Activated CD4-positive, alpha-beta memory T cell treated with anti-CD3 and anti-CD28 coated beads for 36 hours (primary cell): ENCODE measurements at regions of chr2 and their contacts with region 1.

Region 1: DNA sequence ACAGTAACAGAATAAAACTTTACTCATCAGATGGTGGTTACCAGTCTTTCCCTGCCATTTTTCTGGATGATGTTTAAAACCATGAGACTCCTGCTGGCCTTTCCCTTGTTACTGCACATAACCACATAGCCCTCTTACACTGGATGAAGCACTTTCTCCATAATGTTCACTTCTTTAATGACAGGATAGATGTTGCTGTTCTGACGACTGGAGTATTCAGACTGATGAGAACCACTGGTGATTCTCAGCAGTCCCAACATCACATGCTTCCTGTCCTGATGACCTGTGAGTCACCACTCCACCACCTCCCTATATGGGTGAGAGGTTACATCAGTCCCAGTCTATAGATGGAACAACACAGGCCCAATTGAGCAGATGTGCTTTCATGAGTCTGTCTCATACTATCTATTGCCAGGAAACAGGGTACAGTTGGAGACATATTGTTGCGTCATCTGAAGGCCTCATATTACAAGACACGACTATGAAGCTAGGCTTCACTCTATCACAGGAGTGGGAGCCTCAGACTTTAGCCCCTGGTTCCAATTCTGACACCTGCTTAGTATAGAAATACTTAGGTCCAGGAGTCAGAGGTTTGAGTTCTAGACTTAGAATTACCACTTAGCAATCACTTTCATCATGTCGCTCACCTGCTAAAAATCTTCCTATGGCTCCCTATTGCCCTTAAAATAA is 145.7 kb upstream of the KLF7 start:
- DNase-seq: peak; percentile 76
- H3K4me3 Mint-ChIP-seq: peak overlapping the region; percentile 3
- H3K27ac Mint-ChIP-seq: peak overlapping the region; percentile 79
- H3K4me1 Mint-ChIP-seq: peaks cover 28% of the 10 kb centered on the region
- H3K27me3 Mint-ChIP-seq: no peaks in the 10 kb centered on the region

Region 2: GRCh38 chr2:206981739-206982340 is 329.6 kb before region 1 on chr2:
- CTCF ChIA-PET with region 1: no interaction called
- POLR2A ChIA-PET with region 1: no interaction called
- intact Hi-C with region 1: loop called (anchors 10 kb)
- DNase-seq: peak; percentile 70
- H3K4me3 Mint-ChIP-seq: no peak overlapping the region
- H3K27ac Mint-ChIP-seq: no peak overlapping the region
- H3K4me1 Mint-ChIP-seq: peaks cover 5% of the 10 kb centered on the region
- H3K27me3 Mint-ChIP-seq: no peaks in the 10 kb centered on the region

Region 3: DNA sequence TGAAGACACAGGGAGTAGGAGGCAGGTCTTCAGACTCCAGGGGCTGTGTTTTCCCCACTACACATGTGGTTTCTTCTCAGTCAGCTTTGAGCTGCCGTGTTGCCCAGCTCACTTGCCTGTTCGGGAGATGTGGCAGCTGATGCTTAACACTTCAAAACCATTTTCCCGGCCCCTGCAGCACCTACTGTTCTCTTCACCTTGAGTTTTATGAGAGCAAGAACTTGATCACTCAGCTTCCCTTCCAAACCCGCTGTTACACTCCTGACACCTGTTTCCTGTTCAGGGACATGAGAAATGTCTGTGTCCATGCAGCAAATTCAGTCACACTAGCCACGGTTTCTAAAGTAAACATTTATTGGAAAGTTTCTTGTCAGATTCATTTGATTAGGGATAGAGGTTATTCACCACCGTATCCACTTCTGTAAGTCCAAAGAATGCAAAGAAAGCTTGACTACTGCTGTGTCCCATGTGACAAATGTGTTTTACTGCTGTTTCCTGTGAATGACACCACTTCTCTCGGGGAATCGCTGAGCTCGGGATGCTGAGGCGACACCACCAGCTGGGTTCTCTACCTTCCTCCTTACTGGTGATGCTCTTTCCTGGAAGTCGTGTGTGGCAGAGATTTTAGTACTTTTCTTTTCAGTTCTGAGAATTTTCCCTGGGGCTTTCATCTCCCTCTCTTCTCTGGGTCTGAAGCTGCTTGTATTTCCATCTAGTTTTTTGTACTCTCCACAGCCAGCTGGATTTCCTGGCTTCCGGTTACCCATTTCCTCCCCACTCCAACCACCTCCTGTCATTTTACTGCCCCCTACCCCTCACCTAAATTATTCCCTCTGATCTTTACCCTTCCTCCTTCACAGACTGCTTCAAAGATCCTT is 237.4 kb before region 1 on chr2:
- CTCF ChIA-PET with region 1: no interaction called
- POLR2A ChIA-PET with region 1: no interaction called
- intact Hi-C with region 1: loop called (anchors 5 kb)
- DNase-seq: peak; percentile 69
- H3K4me3 Mint-ChIP-seq: peak overlapping the region; percentile 41
- H3K27ac Mint-ChIP-seq: peak overlapping the region; percentile 85
- H3K4me1 Mint-ChIP-seq: peaks cover 27% of the 10 kb centered on the region
- H3K27me3 Mint-ChIP-seq: peaks cover 2% of the 10 kb centered on the region

Region 4: GRCh38 chr2:207283356-207283755 is 28.1 kb before region 1 on chr2:
- CTCF ChIA-PET with region 1: interaction called, 3 read pairs
- POLR2A ChIA-PET with region 1: no interaction called
- intact Hi-C with region 1: loop called (anchors 1 kb)
- DNase-seq: peak; percentile 34
- H3K4me3 Mint-ChIP-seq: no peak overlapping the region
- H3K27ac Mint-ChIP-seq: peak overlapping the region; percentile 65
- H3K4me1 Mint-ChIP-seq: peaks cover 67% of the 10 kb centered on the region
- H3K27me3 Mint-ChIP-seq: no peaks in the 10 kb centered on the region

Region 5: DNA sequence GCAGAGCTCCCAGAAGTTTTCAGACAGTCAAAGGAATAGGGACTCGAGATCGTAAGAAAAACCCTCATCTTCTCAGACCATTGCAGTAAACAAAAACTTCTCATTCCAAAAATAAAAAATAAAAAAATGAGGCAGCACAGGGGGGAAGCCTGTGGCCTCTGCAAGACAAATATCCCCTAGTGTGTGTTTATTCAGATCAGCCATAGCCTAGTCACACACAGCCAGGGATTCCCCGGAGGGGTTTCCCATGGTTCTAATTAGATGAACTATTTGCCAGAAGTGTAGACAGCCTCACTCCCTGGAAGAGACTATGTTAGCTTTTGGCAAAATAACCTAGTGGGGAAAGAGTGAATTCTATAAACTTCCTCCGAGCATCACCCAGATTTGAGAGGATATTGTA is 22.8 kb before region 1 on chr2:
- CTCF ChIA-PET with region 1: interaction called, 3 read pairs
- POLR2A ChIA-PET with region 1: no interaction called
- intact Hi-C with region 1: loop called (anchors 1 kb)
- DNase-seq: peak; percentile 76
- H3K4me3 Mint-ChIP-seq: no peak overlapping the region
- H3K27ac Mint-ChIP-seq: peak overlapping the region; percentile 9
- H3K4me1 Mint-ChIP-seq: peaks cover 80% of the 10 kb centered on the region
- H3K27me3 Mint-ChIP-seq: peaks cover 4% of the 10 kb centered on the region

Region 6: DNA sequence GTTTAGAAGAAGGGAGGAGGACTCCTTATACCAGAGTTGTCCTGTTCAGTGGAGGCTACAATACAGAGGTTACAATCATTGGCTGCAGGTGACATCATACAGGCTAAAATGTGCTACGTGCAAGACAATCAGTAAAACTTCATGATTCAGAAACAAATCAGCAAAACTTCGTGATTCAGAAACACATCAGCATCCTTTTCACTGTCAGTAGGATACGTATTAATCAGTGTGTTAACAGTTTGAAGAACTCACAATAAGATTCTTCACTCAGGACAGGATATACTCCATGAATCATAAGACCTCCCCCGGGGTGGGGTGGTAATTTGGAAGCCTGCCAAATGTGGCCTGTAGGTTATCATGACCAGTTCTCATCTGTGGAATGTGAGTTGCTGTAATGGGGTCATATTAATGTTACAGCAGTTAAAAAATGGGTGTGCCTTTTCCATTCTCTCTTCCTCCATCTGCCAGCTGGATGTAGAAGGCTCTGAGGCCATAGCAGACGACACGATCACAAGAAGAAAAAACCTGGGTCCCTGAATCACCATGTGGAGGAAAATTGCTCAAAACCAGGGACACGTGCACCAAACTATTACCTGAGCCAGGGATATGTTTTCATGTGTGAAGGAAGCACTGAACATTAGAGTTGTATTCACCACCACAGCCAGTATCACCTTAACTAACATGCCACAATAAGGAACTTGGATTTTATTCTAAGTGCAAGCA is 83.5 kb after region 1 on chr2:
- CTCF ChIA-PET with region 1: no interaction called
- POLR2A ChIA-PET with region 1: no interaction called
- intact Hi-C with region 1: loop called (anchors 1 kb)
- DNase-seq: peak; percentile 86
- H3K4me3 Mint-ChIP-seq: no peak overlapping the region
- H3K27ac Mint-ChIP-seq: peak overlapping the region; percentile 85
- H3K4me1 Mint-ChIP-seq: peaks cover 17% of the 10 kb centered on the region
- H3K27me3 Mint-ChIP-seq: peaks cover 1% of the 10 kb centered on the region